Activated B cell treated with CpG ODN at 0.5 μM for 24 hours (primary cell): ENCODE measurements at regions of chr18 and their contacts with region 1.

Region 1: DNA sequence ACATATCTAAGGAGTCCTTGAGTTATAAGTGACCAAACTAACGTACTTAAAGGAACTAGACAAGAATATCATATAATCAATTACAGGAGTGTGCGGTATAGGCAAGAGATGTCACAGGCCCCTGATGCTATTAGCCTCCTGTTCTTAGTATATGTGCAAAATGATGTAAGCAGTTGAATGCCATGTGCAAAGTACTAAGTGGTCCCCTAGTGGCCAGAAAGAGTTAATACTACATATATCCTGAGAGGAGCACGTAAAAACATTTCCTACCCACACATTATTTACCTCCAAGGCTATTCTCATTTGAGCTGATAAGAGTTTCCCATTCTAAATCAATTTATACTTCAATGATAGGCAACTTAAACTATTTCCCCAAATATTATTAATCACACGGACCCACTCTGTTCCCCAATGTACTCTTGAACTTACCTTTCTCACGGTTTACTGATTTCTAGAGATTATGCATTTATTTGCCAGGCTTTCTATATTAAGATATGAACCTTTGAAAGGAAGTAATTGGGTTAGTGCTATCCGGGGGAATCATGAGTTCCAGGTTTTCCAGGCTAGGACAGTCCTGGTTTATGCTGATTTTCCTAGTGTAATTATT is 158.0 kb upstream of the KLHL14 start:
- DNase-seq: no peak
- ATAC-seq: peak; percentile 100
- H3K4me3 Mint-ChIP-seq: no peak overlapping the region
- H3K27ac Mint-ChIP-seq: no peak overlapping the region
- H3K4me1 Mint-ChIP-seq: peaks cover 2% of the 10 kb centered on the region
- H3K27me3 Mint-ChIP-seq: peaks cover 2% of the 10 kb centered on the region
- CTCF ChIP-seq: no peak

Region 2: GRCh38 chr18:32158108-32158624 is 772.6 kb before region 1 on chr18:
- CTCF ChIA-PET with region 1: no interaction called
- POLR2A ChIA-PET with region 1: no interaction called
- intact Hi-C with region 1: loop called (anchors 2 kb)
- DNase-seq: peak; percentile 33
- ATAC-seq: peak; percentile 90
- H3K4me3 Mint-ChIP-seq: peak overlapping the region; percentile 21
- H3K27ac Mint-ChIP-seq: no peak overlapping the region
- H3K4me1 Mint-ChIP-seq: peaks cover 8% of the 10 kb centered on the region
- H3K27me3 Mint-ChIP-seq: peaks cover 7% of the 10 kb centered on the region
- CTCF ChIP-seq: peak; percentile 29

Region 3: GRCh38 chr18:32576296-32576916 is 354.4 kb before region 1 on chr18:
- CTCF ChIA-PET with region 1: interaction called, 3 read pairs
- POLR2A ChIA-PET with region 1: no interaction called
- intact Hi-C with region 1: loop called (anchors 1 kb)
- DNase-seq: no peak
- ATAC-seq: peak; percentile 34
- H3K4me3 Mint-ChIP-seq: no peak overlapping the region
- H3K27ac Mint-ChIP-seq: no peak overlapping the region
- H3K4me1 Mint-ChIP-seq: no peaks in the 10 kb centered on the region
- H3K27me3 Mint-ChIP-seq: peaks cover 15% of the 10 kb centered on the region
- CTCF ChIP-seq: no peak

Region 4: DNA sequence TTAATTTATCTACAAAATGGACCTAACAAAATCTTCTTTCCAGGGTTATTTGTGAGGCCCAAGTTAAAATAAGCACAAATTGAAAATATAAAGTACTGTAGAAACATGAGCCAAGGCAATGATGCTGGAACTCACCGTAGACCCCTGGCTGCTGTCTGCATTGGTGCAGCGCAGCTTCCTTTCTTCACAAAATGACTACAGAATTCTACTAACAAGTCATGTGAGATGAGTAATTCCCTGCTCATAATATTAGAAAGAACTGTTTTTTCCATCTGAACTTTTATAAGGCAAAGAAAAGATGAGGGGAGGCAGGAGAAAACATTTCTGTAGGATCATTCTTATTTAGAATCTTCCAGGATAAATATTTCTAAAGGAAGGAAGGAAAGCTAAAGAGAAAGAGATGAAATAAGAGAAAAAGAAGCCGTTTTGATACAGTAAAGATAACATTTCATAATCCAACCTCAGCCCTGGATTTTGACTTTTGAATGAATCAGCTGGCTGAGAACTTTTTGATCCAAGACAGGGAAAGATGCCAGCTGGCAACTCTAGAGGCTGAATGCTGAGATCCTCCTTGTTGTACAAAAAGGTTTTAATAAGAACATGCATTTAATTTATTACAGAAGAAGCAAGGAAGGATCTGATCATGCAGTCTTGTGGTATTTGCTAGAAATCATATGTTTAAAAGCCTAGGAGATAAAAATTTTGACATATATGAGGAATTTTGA is 26.0 kb after region 1 on chr18:
- CTCF ChIA-PET with region 1: no interaction called
- POLR2A ChIA-PET with region 1: no interaction called
- intact Hi-C with region 1: no loop called
- DNase-seq: no peak
- ATAC-seq: no peak
- H3K4me3 Mint-ChIP-seq: no peak overlapping the region
- H3K27ac Mint-ChIP-seq: no peak overlapping the region
- H3K4me1 Mint-ChIP-seq: no peaks in the 10 kb centered on the region
- H3K27me3 Mint-ChIP-seq: peaks cover 5% of the 10 kb centered on the region
- CTCF ChIP-seq: no peak

Region 5: DNA sequence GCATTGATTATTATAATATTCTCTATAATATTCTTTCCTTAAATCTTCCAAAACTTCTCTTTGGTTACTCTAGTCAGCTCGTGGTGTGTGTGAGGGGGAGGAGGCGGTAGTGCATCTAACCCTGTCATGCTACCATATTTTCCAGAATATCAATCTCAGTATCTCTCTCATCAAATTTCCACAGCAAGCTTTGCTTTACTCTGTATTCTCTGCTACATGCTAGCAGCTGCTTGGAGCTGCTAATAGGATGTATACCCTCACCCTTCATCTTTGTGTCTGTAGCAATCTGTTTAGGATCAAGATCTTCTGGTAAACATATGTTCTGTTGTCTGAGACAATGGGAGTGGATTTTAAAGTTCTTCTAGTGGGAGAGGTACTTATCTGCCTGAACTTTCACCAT is 145.8 kb after region 1 on chr18:
- CTCF ChIA-PET with region 1: no interaction called
- POLR2A ChIA-PET with region 1: no interaction called
- intact Hi-C with region 1: no loop called
- DNase-seq: no peak
- ATAC-seq: no peak
- H3K4me3 Mint-ChIP-seq: no peak overlapping the region
- H3K27ac Mint-ChIP-seq: no peak overlapping the region
- H3K4me1 Mint-ChIP-seq: no peaks in the 10 kb centered on the region
- H3K27me3 Mint-ChIP-seq: no peaks in the 10 kb centered on the region
- CTCF ChIP-seq: no peak